Esophagus muscularis mucosa (tissue), 4 donors: ENCODE measurements at regions of chr12 and their contacts with region 1.

Region 1: DNA sequence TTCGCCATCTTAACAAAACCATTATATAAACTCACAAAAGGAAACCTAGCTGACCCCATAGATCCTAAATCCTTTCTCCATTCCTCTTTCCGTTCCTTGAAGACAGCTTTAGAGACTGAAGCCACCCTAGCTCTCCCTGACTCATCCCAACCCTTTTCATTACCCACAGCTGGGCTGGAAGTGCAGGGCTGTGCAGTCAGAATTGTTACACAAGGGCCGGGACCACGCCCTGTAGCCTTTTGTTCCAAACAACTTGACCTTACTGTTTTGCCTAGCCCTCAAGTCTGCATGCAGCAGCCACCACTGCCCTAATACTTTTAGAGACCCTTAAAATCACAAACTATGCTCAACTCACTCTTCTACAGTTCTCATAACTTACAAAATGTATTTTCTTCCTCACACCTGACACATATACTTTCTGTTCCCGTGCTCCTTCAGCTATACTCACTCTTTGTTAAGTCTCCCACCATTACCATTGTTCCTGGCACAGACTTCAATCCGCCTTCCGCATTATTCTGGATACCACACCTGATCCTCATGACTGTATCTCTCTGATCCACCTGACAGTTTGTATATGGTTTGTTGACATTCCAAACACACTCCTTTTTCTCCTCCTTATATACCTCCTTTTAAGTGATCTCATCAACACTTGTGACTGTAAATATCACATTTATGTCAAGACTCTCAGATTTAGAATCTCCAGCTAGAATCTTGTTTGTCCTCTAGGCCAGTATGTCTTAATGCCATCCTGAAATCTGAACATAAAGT is 208.7 kb downstream of the KITLG start:
- DNase-seq: no peak
- H3K4me3 ChIP-seq: no peak overlapping the region
- H3K27ac ChIP-seq: no peak overlapping the region
- H3K4me1 ChIP-seq: peaks cover 0 to 7% (median under 1%) of the 10 kb centered on the region in 4 donors
- H3K27me3 ChIP-seq: no peaks in the 10 kb centered on the region
- CTCF ChIP-seq: no peak
- EP300 ChIP-seq: no peak
- POLR2A ChIP-seq: no peak

Region 2: DNA sequence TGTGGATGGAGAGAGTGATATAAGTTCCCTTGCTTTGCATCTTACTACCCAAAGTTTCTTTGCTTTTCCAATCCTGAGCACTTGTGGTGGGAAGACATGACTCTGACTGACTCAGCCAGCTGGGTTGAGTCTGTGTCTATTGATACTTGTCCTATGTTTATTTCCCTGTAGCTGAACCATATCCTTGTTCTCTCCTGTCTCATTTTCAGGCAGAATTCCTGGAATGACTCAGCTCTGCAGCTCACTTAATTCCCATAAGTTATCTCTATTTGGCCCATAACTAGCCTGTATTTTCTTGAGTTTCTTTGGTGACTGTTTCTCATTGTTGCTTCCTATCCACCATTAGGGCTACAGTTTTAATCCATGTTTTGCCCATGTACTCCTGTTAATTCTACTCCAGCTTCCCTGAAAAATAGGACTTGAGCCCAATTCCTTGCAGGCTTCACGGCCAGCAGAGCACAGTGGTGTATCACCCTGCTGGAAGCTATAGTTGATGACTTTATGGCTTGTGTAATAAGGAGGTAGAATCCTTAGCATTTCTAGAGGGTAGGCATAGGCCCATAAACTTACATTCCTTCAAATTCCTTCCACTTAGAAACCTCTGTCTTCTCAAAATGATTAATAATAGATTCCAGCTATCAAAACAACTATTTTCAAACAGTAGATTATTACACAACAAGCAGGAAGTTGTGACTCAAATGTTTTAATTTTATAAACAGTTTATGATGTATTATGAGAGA is 46.4 kb before region 1 on chr12:
- intact Hi-C with region 1: no loop called
- DNase-seq: no peak
- H3K4me3 ChIP-seq: no peak overlapping the region
- H3K27ac ChIP-seq: peak overlapping the region; percentile 60 to 77 (median 64)
- H3K4me1 ChIP-seq: peaks cover 3 to 19% (median 13%) of the 10 kb centered on the region in 4 donors
- H3K27me3 ChIP-seq: no peaks in the 10 kb centered on the region
- CTCF ChIP-seq: no peak
- EP300 ChIP-seq: no peak
- POLR2A ChIP-seq: no peak

Region 3: DNA sequence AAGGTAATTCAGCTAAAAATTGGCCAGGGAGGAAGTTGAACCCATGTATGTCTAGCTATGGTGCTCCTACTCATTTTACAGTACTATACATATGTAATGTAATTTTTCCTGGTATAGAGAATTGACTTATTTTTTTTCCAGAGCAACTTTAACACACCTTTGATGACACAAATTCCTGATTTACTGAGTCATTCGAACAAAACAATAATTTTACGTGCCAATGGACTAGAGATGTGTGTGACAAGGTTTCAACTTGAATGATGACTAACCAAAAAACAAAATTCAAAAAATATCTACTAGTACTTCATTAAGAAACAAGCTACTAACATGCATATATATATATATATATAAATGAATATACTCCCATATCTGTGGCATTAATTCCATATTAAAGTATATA is 28.2 kb after region 1 on chr12:
- intact Hi-C with region 1: loop called (anchors 2 kb)
- DNase-seq: no peak
- H3K4me3 ChIP-seq: no peak overlapping the region
- H3K27ac ChIP-seq: no peak overlapping the region
- H3K4me1 ChIP-seq: peaks cover 0 to 9% (median 3%) of the 10 kb centered on the region in 4 donors
- H3K27me3 ChIP-seq: no peaks in the 10 kb centered on the region
- CTCF ChIP-seq: no peak
- EP300 ChIP-seq: no peak
- POLR2A ChIP-seq: no peak